Endothelial cell of umbilical vein (primary cell): ENCODE measurements at regions of chr10 and their contacts with region 1.

Region 1: GRCh38 chr10:121900443-121901174 is 27.2 kb downstream of the ATE1 start:
- DNase-seq: peak; percentile 78
- H3K4me3 ChIP-seq: no peak overlapping the region
- H3K27ac ChIP-seq: no peak overlapping the region
- H3K4me1 ChIP-seq: no peaks in the 10 kb centered on the region
- H3K27me3 ChIP-seq: no peaks in the 10 kb centered on the region
- CTCF ChIP-seq: peak; percentile 43 to 47
- POLR2A ChIP-seq: no peak

Region 2: DNA sequence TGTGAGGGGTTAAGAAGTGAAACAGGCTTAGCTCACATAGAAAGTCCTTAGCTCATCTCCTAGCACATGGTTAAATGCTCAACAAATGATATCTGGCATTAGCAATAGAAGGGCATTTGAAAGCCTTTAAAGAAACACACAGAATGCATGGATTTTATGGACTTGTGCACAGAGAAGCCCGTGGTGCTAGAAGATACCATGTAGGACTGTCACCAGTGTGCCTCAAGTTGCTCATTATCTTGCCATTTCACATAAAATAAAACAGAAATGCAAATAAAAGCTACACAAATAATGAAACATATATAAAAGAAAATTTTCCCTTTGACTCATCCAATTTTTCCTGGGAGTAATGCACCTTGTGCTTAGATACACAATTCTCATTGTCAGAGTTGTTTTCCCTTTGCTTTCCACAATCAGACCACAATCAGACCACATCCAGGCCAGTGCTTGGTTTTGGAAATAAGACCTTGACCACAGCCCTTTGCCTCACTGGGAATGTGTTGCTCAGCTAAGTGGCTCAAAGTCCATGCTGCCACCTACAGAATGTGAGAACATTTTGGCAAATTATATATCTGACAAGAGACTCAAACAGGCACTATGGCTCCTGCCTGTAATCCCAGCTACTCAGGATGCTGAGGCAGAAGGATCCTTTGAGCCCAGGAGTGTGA is 1059.0 kb before region 1 on chr10:
- CTCF ChIA-PET with region 1: no interaction called
- POLR2A ChIA-PET with region 1: no interaction called
- dilution Hi-C with region 1: no loop called
- intact Hi-C with region 1: no loop called
- DNase-seq: peak; percentile 7
- H3K4me3 ChIP-seq: no peak overlapping the region
- H3K27ac ChIP-seq: no peak overlapping the region
- H3K4me1 ChIP-seq: no peaks in the 10 kb centered on the region
- H3K27me3 ChIP-seq: no peaks in the 10 kb centered on the region
- CTCF ChIP-seq: no peak
- POLR2A ChIP-seq: no peak

Region 3: DNA sequence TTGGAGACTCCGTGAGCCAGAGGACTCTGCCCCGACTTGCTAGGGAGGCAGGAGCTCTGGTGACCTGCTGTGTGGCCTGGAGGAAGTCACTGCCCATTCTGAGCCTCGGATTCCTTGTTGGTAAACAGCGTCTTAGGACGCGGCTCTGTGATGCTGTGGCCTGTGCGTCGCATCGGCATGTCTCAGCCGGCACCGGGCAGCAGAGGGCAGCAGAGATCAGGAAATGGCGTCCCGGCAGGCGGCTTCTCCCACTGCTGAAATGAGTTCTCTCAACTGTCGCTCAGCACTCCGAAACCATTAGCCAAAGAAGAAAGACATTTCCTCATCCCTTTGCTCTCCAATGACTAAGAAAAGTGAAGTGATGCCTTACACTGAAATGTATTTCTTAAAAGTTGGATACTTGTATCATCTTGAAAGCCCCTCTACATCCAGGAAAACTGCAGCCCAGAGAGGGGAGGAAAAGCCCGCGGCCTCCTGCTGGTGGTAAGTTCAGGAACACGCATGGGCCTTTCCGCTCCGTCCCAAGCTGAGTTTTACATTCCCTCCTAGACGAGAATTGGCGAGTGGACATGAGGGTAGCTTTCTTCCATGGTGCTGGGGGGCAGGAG is 957.7 kb before region 1 on chr10:
- CTCF ChIA-PET with region 1: interaction called, 18 read pairs
- POLR2A ChIA-PET with region 1: no interaction called
- dilution Hi-C with region 1: no loop called
- intact Hi-C with region 1: loop called (anchors 1 kb)
- DNase-seq: peak; percentile 81
- H3K4me3 ChIP-seq: no peak overlapping the region
- H3K27ac ChIP-seq: no peak overlapping the region
- H3K4me1 ChIP-seq: no peaks in the 10 kb centered on the region
- H3K27me3 ChIP-seq: no peaks in the 10 kb centered on the region
- CTCF ChIP-seq: peak; percentile 83 to 85
- POLR2A ChIP-seq: no peak

Region 4: GRCh38 chr10:121608469-121609190 is 292.0 kb before region 1 on chr10:
- CTCF ChIA-PET with region 1: interaction called, 13 read pairs
- POLR2A ChIA-PET with region 1: no interaction called
- dilution Hi-C with region 1: no loop called
- intact Hi-C with region 1: loop called (anchors 1 kb)
- DNase-seq: peak; percentile 24
- H3K4me3 ChIP-seq: no peak overlapping the region
- H3K27ac ChIP-seq: no peak overlapping the region
- H3K4me1 ChIP-seq: no peaks in the 10 kb centered on the region
- H3K27me3 ChIP-seq: peaks cover 7 to 11% of the 10 kb centered on the region in 2 experiments
- CTCF ChIP-seq: peak; percentile 72 to 80
- POLR2A ChIP-seq: no peak

Region 5: GRCh38 chr10:121880895-121881294 is 19.7 kb before region 1 on chr10:
- CTCF ChIA-PET with region 1: interaction called, 29 read pairs
- POLR2A ChIA-PET with region 1: no interaction called
- dilution Hi-C with region 1: no loop called
- intact Hi-C with region 1: no loop called
- DNase-seq: peak; percentile 2
- H3K4me3 ChIP-seq: no peak overlapping the region
- H3K27ac ChIP-seq: no peak overlapping the region
- H3K4me1 ChIP-seq: no peaks in the 10 kb centered on the region
- H3K27me3 ChIP-seq: no peaks in the 10 kb centered on the region
- CTCF ChIP-seq: no peak
- POLR2A ChIP-seq: no peak

Region 6: GRCh38 chr10:121910673-121911420 is 10.2 kb after region 1 on chr10:
- CTCF ChIA-PET with region 1: interaction called, 10 read pairs
- POLR2A ChIA-PET with region 1: no interaction called
- dilution Hi-C with region 1: no loop called
- intact Hi-C with region 1: no loop called
- DNase-seq: no peak
- H3K4me3 ChIP-seq: no peak overlapping the region
- H3K27ac ChIP-seq: no peak overlapping the region
- H3K4me1 ChIP-seq: no peaks in the 10 kb centered on the region
- H3K27me3 ChIP-seq: no peaks in the 10 kb centered on the region
- CTCF ChIP-seq: no peak
- POLR2A ChIP-seq: no peak

Region 7: GRCh38 chr10:121941532-121941931 is 40.9 kb after region 1 on chr10:
- CTCF ChIA-PET with region 1: no interaction called
- POLR2A ChIA-PET with region 1: no interaction called
- dilution Hi-C with region 1: no loop called
- intact Hi-C with region 1: no loop called
- DNase-seq: no peak
- H3K4me3 ChIP-seq: no peak overlapping the region
- H3K27ac ChIP-seq: no peak overlapping the region
- H3K4me1 ChIP-seq: peaks cover 18% of the 10 kb centered on the region
- H3K27me3 ChIP-seq: no peaks in the 10 kb centered on the region
- CTCF ChIP-seq: no peak
- POLR2A ChIP-seq: no peak

Region 8: GRCh38 chr10:122199070-122199469 is 298.5 kb after region 1 on chr10:
- CTCF ChIA-PET with region 1: no interaction called
- POLR2A ChIA-PET with region 1: no interaction called
- dilution Hi-C with region 1: no loop called
- intact Hi-C with region 1: no loop called
- DNase-seq: no peak
- H3K4me3 ChIP-seq: no peak overlapping the region
- H3K27ac ChIP-seq: no peak overlapping the region
- H3K4me1 ChIP-seq: peaks cover 7% of the 10 kb centered on the region
- H3K27me3 ChIP-seq: no peaks in the 10 kb centered on the region
- CTCF ChIP-seq: no peak
- POLR2A ChIP-seq: no peak